ENCODE measurements at regions of chr7 and their contacts with region 1.

Region 1: DNA sequence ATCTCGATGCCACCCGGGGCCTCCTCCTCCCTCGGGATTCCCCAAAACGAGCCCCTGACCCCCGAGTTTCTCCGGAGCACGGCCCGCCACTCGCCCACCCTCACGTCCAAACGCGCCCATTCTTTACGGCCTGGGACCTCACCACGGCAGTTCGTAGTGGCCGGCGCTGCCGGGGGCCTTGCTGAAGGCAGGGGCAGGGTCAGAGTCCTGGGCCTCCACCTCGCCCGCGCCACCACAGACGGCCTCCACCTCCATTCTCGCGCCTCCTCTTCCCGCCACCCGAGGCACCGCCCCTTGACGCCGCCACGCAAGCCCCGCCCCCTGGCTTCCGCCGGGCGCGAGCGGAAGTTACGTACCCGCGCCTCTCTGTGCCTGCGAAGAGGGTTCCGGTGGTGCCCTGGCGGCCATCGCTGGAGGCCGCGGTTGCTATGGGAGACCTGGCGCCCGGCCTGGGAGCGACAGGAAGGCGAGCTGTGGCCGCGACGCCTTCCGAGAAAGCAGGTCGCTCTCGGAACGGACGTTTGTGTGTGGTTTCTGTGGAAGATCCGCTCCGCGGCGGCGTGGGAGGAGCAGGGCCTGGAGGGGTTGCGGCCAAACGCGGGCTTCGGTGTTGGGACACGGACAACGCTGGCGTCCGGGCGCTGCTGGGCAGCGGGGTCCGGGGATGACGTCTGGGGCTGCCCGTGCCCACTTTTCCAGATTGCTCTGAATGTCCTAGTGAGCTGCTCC is at the start of gene RFC2:
- DNase-seq: peak; percentile 93 to 99 (median 96)
- H3K4me3 ChIP-seq: peak within 1 kb of the TSS; percentile 81 to 100
- H3K4me3 Mint-ChIP-seq: peak within 1 kb of the TSS; percentile 91 to 97 (median 94)
- H3K27ac ChIP-seq: peak within 1 kb of the TSS; percentile 92
- H3K27ac Mint-ChIP-seq: peak within 1 kb of the TSS; percentile 94 to 97 (median 96)
- H3K4me1 ChIP-seq: peaks cover 22% of the 10 kb centered on the region
- H3K4me1 Mint-ChIP-seq: peaks cover 16 to 37% (median 23%) of the 10 kb centered on the region in 4 donors
- H3K27me3 ChIP-seq: no peaks in the 10 kb centered on the region
- H3K27me3 Mint-ChIP-seq: no peaks in the 10 kb centered on the region
- total RNA-seq, gene RFC2: 15.7 to 17.7 TPM

Region 2: DNA sequence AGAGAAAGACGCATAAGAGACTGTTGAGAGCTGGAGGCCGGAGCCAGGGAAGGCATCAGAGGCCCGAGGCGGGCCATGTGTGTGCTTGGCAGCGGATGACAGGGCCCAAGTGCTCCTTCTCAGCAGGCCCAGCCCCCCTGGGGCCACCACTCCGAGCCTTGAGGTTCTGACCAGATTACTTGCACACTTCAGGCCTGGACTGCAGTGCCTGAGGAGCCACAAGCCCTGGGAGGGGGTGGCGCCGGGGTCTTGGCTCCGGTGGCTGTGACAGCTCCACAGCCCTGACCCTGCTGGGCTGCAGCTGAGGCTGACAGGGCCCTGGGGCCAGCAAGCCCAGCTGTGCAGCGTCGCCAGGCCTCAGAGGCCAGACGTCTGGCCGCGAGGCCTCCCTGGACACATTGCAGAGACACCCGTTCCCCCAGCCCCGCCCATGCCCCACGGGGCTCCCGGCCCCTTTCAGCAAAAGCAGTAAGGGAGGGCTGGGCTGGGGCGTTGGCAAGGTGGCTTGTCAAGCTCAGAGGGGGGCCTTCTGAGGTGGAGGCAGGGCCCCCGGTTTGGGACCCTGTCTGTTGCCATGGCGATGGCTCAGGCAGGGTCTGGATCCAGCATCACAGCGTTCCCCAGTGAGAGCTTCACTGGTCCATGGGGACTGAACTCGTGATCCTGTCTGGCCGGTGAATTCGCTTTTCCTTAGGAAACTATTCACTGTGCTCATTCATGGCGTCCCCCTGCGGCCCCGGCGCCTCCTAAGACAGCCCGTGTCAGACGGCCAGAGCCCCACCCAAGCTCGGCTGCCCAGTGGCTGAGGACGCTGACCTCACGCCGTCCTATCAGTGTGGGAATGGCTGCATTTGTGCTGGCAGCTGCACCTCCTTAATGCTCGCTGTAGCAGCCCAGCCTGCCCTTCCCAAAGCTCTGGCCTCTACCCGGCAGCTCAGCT is 220.7 kb before region 1 on chr7:
- CTCF ChIA-PET with region 1: no interaction called
- POLR2A ChIA-PET with region 1: no interaction called
- intact Hi-C with region 1: no loop called
- DNase-seq: no peak
- H3K4me3 ChIP-seq: no peak overlapping the region
- H3K4me3 Mint-ChIP-seq: no peak overlapping the region
- H3K27ac ChIP-seq: no peak overlapping the region
- H3K27ac Mint-ChIP-seq: no peak overlapping the region
- H3K4me1 ChIP-seq: no peaks in the 10 kb centered on the region
- H3K4me1 Mint-ChIP-seq: peaks cover 3 to 10% (median 7%) of the 10 kb centered on the region in 4 donors
- H3K27me3 ChIP-seq: peaks cover 5% of the 10 kb centered on the region
- H3K27me3 Mint-ChIP-seq: peaks cover 21 to 23% of the 10 kb centered on the region in 2 donors

Region 3: DNA sequence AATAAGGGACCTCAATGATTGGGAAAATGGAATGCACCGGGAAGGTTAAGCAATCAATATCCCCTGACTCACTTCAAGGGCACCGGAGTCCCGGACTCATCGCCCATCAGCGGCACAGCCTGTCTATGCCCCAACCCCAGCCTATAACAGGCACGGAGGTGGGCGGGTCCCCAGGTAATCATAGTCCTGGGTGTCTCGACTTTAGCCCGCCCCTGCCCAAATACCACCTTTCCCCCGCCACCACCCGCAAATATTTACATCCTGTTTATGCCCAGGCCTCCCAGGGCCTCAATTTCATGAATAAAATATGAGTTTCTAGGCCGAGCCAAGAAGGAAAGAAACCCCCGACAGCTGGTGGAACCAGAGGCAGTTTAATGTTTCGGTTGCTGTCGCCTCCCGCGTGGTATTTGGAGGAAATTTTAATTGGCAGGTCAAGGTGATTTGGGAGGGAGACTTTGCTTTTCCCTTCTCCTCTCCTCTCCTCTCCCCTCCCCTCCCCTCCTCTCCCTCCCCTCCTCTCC is 15.5 kb after region 1 on chr7:
- CTCF ChIA-PET with region 1: no interaction called
- POLR2A ChIA-PET with region 1: no interaction called
- intact Hi-C with region 1: loop called (anchors 1 kb)
- DNase-seq: peak; percentile 60 to 82 (median 66)
- H3K4me3 ChIP-seq: peak overlapping the region; percentile 57 to 90
- H3K4me3 Mint-ChIP-seq: peak overlapping the region; percentile 88 to 94 (median 92)
- H3K27ac ChIP-seq: peak overlapping the region; percentile 21
- H3K27ac Mint-ChIP-seq: peak overlapping the region in 6 of 7 donors; percentile 10 to 90 (median 62)
- H3K4me1 ChIP-seq: no peaks in the 10 kb centered on the region
- H3K4me1 Mint-ChIP-seq: peaks cover 4 to 7% (median 5%) of the 10 kb centered on the region in 4 donors
- H3K27me3 ChIP-seq: no peaks in the 10 kb centered on the region
- H3K27me3 Mint-ChIP-seq: peaks cover 0 to 9% of the 10 kb centered on the region in 2 donors

Region 4: GRCh38 chr7:74289018-74289658 is 34.8 kb after region 1 on chr7 and contains the start of gene CLIP2:
- CTCF ChIA-PET with region 1: no interaction called
- POLR2A ChIA-PET with region 1: no interaction called
- intact Hi-C with region 1: loop called (anchors 1 kb)
- DNase-seq: peak; percentile 67 to 73 (median 71)
- H3K4me3 ChIP-seq: peak within 1 kb of the TSS; percentile 60 to 65
- H3K4me3 Mint-ChIP-seq: peak within 1 kb of the TSS; percentile 87 to 97 (median 90)
- H3K27ac ChIP-seq: no peak within 1 kb of the TSS
- H3K27ac Mint-ChIP-seq: peak within 1 kb of the TSS; percentile 71 to 92 (median 85)
- H3K4me1 ChIP-seq: peaks cover 24% of the 10 kb centered on the region
- H3K4me1 Mint-ChIP-seq: peaks cover 15 to 35% (median 18%) of the 10 kb centered on the region in 4 donors
- H3K27me3 ChIP-seq: no peaks in the 10 kb centered on the region
- H3K27me3 Mint-ChIP-seq: peaks cover 3 to 7% of the 10 kb centered on the region in 2 donors
- total RNA-seq, gene CLIP2: 3.0 to 5.7 TPM

Region 5: DNA sequence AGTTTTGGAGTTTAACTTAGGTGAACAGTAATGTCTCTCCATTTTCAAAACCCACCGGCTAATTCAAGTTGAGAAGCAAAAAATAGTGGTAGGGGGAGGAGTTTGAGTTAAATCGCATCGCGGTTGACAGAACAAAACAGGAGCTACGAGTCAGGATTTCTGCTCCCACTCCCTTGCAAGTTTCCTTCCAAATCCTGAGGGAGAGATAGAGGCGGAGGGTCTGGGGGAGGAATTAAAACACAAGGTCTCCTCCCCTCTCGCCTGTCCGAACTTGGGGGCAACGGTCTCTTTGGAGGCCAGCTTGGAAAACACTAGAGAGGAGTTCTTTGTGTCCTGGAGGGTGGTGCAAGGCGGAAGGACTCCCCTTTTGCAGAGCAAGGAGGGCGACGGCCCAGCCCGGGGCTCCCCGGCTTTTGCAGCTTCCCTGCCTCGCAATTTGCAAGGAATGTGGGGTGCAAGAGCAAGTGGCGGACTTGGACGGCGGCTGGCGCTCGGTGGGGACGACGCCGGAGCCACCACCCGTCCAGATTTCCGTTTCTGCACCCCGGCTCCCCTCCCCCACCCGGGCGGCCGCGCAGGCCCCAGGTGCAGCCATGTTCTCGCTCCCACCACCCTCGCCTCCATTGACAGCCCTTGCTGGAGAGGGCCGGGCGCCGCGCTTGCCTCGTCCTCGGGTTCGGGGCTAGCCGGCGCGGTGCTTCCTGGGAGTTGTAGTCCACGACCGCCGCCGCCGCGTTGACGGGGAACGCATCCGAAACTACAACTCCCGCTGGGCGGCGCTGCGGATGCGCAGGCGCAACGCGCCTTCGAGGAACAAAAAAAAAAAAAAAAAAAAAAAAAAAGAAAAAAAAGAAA is 402.8 kb after region 1 on chr7:
- CTCF ChIA-PET with region 1: no interaction called
- POLR2A ChIA-PET with region 1: no interaction called
- intact Hi-C with region 1: loop called (anchors 1 kb)
- DNase-seq: peak; percentile 95 to 96 (median 96)
- H3K4me3 ChIP-seq: peak overlapping the region; percentile 87 to 88
- H3K4me3 Mint-ChIP-seq: peak overlapping the region; percentile 84 to 95 (median 91)
- H3K27ac ChIP-seq: peak overlapping the region; percentile 74
- H3K27ac Mint-ChIP-seq: peak overlapping the region; percentile 82 to 96 (median 92)
- H3K4me1 ChIP-seq: peaks cover 46% of the 10 kb centered on the region
- H3K4me1 Mint-ChIP-seq: peaks cover 23 to 57% (median 42%) of the 10 kb centered on the region in 4 donors
- H3K27me3 ChIP-seq: no peaks in the 10 kb centered on the region
- H3K27me3 Mint-ChIP-seq: no peaks in the 10 kb centered on the region

Measured in CD4-positive, alpha-beta memory T cell (primary cell).